ENCODE measurements at regions of chr11 and their contacts with region 1.

Region 1: DNA sequence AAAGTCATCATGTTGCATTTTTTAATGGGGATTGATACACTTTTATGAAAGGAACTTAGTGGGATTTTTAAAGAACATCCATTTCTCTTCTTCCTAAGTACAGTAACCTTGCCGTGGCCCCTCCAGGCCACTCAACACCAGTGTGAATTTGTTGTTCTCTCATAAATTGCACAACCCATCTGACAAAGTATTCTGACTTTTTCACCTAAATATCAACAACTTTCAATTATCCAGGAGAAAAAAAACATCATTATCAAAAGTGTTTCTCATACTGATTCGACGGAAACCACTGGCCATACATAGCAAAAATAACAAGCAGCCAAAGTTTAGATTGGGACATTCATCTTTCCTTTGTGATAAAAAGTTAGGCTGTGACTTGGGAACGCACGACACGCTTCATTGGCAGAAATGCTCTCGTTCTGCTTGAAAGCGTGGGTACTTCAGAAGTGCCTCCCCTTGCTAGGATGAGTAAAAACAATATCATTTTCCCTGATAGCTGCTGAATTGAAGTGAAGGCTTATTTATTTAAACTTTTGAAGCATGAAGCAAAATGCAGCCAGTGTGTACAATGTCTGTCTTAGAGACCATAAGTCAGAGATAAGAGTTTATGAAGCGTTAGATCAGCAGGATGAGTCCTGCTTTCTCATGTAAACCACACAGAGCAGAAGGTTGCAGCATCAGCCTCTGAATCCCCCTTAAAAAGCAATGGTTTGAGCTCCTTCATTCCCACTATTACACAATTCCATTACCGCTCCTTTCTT is 20.6 kb upstream of the EIF3M start:
- DNase-seq: no peak
- ATAC-seq: no peak
- H3K4me3 ChIP-seq: no peak overlapping the region
- H3K27ac ChIP-seq: no peak overlapping the region
- H3K4me1 ChIP-seq: no peaks in the 10 kb centered on the region
- H3K27me3 ChIP-seq: no peaks in the 10 kb centered on the region
- CTCF ChIP-seq: no peak
- EP300 ChIP-seq: no peak
- POLR2A ChIP-seq: no peak
- RAD21 ChIP-seq: no peak

Region 2: GRCh38 chr11:32448232-32448631 is 114.8 kb before region 1 on chr11:
- CTCF ChIA-PET with region 1: no interaction called
- POLR2A ChIA-PET with region 1: no interaction called
- RAD21 ChIA-PET with region 1: no interaction called
- SMC1A ChIA-PET with region 1: no interaction called
- in situ Hi-C with region 1: no loop called
- intact Hi-C with region 1: loop called (anchors 10 kb)
- DNase-seq: peak; percentile 9
- ATAC-seq: peak; percentile 88
- H3K4me3 ChIP-seq: no peak overlapping the region
- H3K27ac ChIP-seq: no peak overlapping the region
- H3K4me1 ChIP-seq: no peaks in the 10 kb centered on the region
- H3K27me3 ChIP-seq: no peaks in the 10 kb centered on the region
- CTCF ChIP-seq: peak; percentile 23 to 47 (median 33); a peak in 4 of 6 replicates
- EP300 ChIP-seq: no peak
- POLR2A ChIP-seq: no peak
- RAD21 ChIP-seq: peak; percentile 46

Region 3: GRCh38 chr11:32549611-32550187 is 13.3 kb before region 1 on chr11:
- CTCF ChIA-PET with region 1: interaction called, 4 read pairs
- POLR2A ChIA-PET with region 1: interaction called, 3 read pairs
- RAD21 ChIA-PET with region 1: interaction called, 4 read pairs
- SMC1A ChIA-PET with region 1: interaction called, 11 read pairs
- in situ Hi-C with region 1: no loop called
- intact Hi-C with region 1: no loop called
- DNase-seq: no peak
- ATAC-seq: no peak
- H3K4me3 ChIP-seq: no peak overlapping the region
- H3K27ac ChIP-seq: no peak overlapping the region
- H3K4me1 ChIP-seq: no peaks in the 10 kb centered on the region
- H3K27me3 ChIP-seq: no peaks in the 10 kb centered on the region
- CTCF ChIP-seq: no peak
- EP300 ChIP-seq: no peak
- POLR2A ChIP-seq: no peak
- RAD21 ChIP-seq: no peak

Region 4: DNA sequence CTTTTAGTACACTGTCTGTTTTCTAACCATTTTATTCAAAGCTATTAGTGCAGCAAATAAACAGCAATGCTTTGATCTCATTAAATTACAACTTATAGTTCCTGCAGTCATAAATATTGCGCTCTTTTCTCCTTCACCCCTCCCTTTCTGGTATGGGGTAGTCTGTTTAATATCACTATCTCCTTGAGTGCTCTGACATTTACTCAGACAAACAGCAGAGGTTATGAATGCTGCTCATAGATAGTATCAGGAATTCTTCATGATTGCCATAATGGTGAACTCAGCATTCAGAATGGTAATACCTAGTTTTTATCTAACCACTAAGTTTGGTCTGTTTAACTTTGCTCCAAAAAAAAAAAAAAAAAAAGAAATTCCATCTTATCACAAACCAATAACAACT is 108.0 kb after region 1 on chr11:
- CTCF ChIA-PET with region 1: no interaction called
- POLR2A ChIA-PET with region 1: no interaction called
- RAD21 ChIA-PET with region 1: no interaction called
- SMC1A ChIA-PET with region 1: no interaction called
- in situ Hi-C with region 1: no loop called
- intact Hi-C with region 1: no loop called
- DNase-seq: no peak
- ATAC-seq: no peak
- H3K4me3 ChIP-seq: no peak overlapping the region
- H3K27ac ChIP-seq: no peak overlapping the region
- H3K4me1 ChIP-seq: no peaks in the 10 kb centered on the region
- H3K27me3 ChIP-seq: no peaks in the 10 kb centered on the region
- CTCF ChIP-seq: no peak
- EP300 ChIP-seq: no peak
- POLR2A ChIP-seq: no peak
- RAD21 ChIP-seq: no peak

Region 5: GRCh38 chr11:32821517-32821916 is 258.5 kb after region 1 on chr11:
- CTCF ChIA-PET with region 1: no interaction called
- POLR2A ChIA-PET with region 1: no interaction called
- RAD21 ChIA-PET with region 1: no interaction called
- SMC1A ChIA-PET with region 1: no interaction called
- in situ Hi-C with region 1: no loop called
- intact Hi-C with region 1: no loop called
- DNase-seq: no peak
- ATAC-seq: peak; percentile 65
- H3K4me3 ChIP-seq: peak overlapping the region; percentile 18; the same call in 1 of the 2 replicates
- H3K27ac ChIP-seq: no peak overlapping the region
- H3K4me1 ChIP-seq: no peaks in the 10 kb centered on the region
- H3K27me3 ChIP-seq: no peaks in the 10 kb centered on the region
- CTCF ChIP-seq: no peak
- EP300 ChIP-seq: no peak
- POLR2A ChIP-seq: no peak
- RAD21 ChIP-seq: no peak

Measured in GM12878 (cell line).